ENCODE measurements at regions of chr5 and their contacts with region 1.

Region 1: DNA sequence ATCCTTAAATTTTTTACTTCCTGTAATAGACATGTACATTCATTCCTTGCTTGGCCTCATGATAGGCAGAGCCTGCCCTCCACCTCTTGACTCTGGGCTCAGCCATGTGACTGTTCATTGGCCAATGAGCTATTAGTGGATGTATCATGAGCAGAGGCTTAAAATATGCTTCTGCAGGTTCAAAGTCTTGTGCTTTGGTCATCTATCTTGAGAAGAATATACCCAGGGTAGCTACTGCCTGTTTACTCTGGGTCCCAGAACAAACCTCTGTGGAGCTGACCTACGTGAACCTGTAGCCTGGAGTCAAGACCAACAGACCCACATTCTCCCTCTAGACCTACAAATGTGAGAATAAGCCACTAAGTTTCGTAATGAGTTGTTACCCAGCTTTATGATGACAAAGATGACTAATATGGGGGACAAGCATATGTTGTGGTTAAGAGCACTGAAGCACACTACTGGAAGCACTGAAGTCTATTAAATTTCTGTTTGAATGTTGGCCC is 244.4 kb downstream of the MAST4 start:
- DNase-seq: no peak
- ATAC-seq: no peak
- H3K4me3 ChIP-seq: no peak overlapping the region
- H3K27ac ChIP-seq: no peak overlapping the region
- H3K4me1 ChIP-seq: peaks cover 0 to 46% (median 26%) of the 10 kb centered on the region in 9 donors
- H3K27me3 ChIP-seq: no peaks in the 10 kb centered on the region
- CTCF ChIP-seq: no peak

Region 2: GRCh38 chr5:66701244-66701643 is 139.3 kb before region 1 on chr5:
- intact Hi-C with region 1: no loop called
- DNase-seq: no peak
- ATAC-seq: no peak
- H3K4me3 ChIP-seq: no peak overlapping the region
- H3K27ac ChIP-seq: no peak overlapping the region
- H3K4me1 ChIP-seq: peaks cover 0 to 26% (median 8%) of the 10 kb centered on the region in 9 donors
- H3K27me3 ChIP-seq: no peaks in the 10 kb centered on the region
- CTCF ChIP-seq: no peak

Region 3: GRCh38 chr5:66796305-66797292 is 44.0 kb before region 1 on chr5:
- intact Hi-C with region 1: no loop called
- DNase-seq: no peak
- ATAC-seq: peak in 4 of 8 donors; percentile 42 to 52 (median 50)
- H3K4me3 ChIP-seq: no peak overlapping the region
- H3K27ac ChIP-seq: no peak overlapping the region
- H3K4me1 ChIP-seq: peaks cover 0 to 14% (median 5%) of the 10 kb centered on the region in 9 donors
- H3K27me3 ChIP-seq: peaks cover 0 to 5% (median 0%) of the 10 kb centered on the region in 7 donors
- CTCF ChIP-seq: peak in 8 of 9 donors; percentile 7 to 41 (median 28)

Region 4: GRCh38 chr5:66807743-66808142 is 32.8 kb before region 1 on chr5:
- intact Hi-C with region 1: no loop called
- DNase-seq: no peak
- ATAC-seq: peak in 7 of 8 donors; percentile 31 to 73 (median 66)
- H3K4me3 ChIP-seq: no peak overlapping the region
- H3K27ac ChIP-seq: no peak overlapping the region
- H3K4me1 ChIP-seq: peaks cover 0 to 9% (median 0%) of the 10 kb centered on the region in 9 donors
- H3K27me3 ChIP-seq: no peaks in the 10 kb centered on the region
- CTCF ChIP-seq: peak in 8 of 9 donors; percentile 8 to 60 (median 42)

Region 5: GRCh38 chr5:66856041-66856805 is 15.7 kb after region 1 on chr5:
- intact Hi-C with region 1: loop called in 1 of 10 experiments (anchors 2 kb)
- DNase-seq: no peak
- ATAC-seq: peak in 3 of 8 donors; percentile 11 to 36 (median 25)
- H3K4me3 ChIP-seq: no peak overlapping the region
- H3K27ac ChIP-seq: no peak overlapping the region
- H3K4me1 ChIP-seq: peaks cover 0 to 56% (median 37%) of the 10 kb centered on the region in 9 donors
- H3K27me3 ChIP-seq: peaks cover 0 to 6% (median 0%) of the 10 kb centered on the region in 7 donors
- CTCF ChIP-seq: no peak

Measured in heart right ventricle (tissue), 16 donors.